Activated CD4-positive, alpha-beta T cell treated with anti-CD3 and anti-CD28 coated beads for 36 hours (primary cell): ENCODE measurements at regions of chr10 and their contacts with region 1.

Region 1: DNA sequence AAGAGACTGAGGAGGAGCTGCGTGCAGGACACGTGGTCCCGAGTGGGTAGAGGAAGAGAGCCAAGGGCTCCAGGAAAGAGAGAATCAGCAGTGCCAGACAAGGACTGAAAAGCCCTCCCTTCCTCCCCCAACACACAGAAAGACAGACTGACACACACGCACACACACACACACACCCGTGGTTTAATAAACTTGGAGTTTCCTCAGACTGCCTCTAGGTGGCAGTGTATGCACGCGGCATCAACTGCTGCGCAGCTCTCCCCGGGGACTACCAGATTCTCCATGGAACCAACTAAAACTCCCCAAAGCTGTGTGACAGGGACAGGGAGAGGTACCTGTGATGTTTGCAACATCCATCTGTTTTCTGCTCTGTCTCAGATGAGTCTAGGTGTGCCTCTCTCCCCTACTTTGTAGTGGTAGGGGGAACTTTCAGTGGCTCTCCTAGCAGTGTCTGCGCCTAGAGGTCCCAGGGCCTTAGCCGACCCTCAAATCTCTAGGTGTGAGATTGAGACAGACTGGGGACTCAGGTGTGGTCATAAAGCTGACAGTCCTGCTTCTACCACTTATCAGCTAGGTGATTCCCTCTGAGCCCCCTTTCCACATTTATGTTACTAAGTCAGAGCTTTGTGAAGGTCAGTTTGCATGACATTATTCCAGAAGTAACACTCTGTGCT is 9.3 kb upstream of the TSPAN14 start:
- DNase-seq: peak; percentile 65
- ATAC-seq: peak; percentile 83
- H3K4me3 Mint-ChIP-seq: no peak overlapping the region
- H3K27ac Mint-ChIP-seq: peak overlapping the region; percentile 48
- H3K4me1 Mint-ChIP-seq: peaks cover 64% of the 10 kb centered on the region
- H3K27me3 Mint-ChIP-seq: no peaks in the 10 kb centered on the region

Region 2: DNA sequence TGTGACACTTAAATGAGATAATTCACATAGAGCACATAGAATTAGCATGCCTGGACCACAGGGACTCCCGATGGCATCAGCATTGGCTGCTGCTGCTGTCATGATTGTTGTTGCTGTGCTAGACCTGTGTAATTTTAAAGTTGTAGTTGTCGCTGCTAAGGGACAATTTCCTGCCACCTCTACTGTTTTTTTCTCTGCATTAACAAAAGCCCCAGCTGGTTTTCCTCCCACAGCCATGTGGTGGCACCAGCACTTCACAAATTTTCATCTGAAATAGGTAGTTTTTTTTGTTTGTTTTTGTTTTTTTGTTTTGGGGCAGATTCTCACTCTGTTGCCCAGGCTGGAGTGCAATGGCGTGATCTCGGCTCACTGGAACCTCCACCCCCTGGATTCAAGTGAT is 61.8 kb before region 1 on chr10:
- CTCF ChIA-PET with region 1: interaction called, 24 read pairs
- POLR2A ChIA-PET with region 1: no interaction called
- intact Hi-C with region 1: loop called (anchors 1 to 2 kb)
- DNase-seq: peak; percentile 73
- ATAC-seq: peak; percentile 53
- H3K4me3 Mint-ChIP-seq: no peak overlapping the region
- H3K27ac Mint-ChIP-seq: no peak overlapping the region
- H3K4me1 Mint-ChIP-seq: peaks cover 15% of the 10 kb centered on the region
- H3K27me3 Mint-ChIP-seq: no peaks in the 10 kb centered on the region

Region 3: DNA sequence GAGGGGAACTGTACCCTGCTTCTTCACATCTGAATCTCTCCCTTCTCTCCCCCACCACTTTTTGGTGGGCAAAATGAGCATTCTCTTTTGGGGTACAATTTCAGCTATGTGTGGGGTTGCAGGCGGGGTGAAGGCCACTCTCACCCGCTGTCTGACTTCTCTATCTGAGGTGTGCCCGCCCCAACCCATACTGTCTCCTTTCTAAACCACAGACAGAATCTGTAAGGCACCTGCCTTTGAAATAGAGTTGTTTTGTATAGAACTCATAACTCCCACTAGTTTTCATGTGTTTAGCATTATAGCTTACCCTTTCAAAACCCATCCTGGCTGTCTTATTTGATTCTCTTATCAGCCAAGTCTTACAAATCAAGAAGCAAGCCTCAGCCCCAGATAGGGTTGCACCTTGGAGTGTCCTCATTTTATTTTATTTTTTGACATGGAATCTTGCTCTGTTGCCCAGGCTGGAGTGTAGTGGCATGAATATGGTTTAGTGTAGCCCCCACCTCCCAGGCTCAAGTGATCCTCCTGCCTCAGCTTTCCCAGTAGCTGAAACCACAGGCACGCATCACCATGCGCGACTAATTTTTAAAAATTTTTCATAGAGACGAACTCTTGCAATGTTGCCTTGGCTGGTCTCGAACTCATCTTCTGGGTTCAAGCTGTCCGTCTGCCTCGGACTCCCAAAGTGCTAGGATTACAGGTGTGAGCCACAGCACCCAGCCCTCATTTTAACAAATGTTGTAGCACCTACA is 21.2 kb after region 1 on chr10:
- CTCF ChIA-PET with region 1: interaction called, 16 read pairs
- POLR2A ChIA-PET with region 1: interaction called, 3 read pairs
- intact Hi-C with region 1: no loop called
- DNase-seq: peak; percentile 65
- ATAC-seq: peak; percentile 52
- H3K4me3 Mint-ChIP-seq: peak overlapping the region; percentile 64
- H3K27ac Mint-ChIP-seq: peak overlapping the region; percentile 97
- H3K4me1 Mint-ChIP-seq: peaks cover 98% of the 10 kb centered on the region
- H3K27me3 Mint-ChIP-seq: no peaks in the 10 kb centered on the region

Region 4: DNA sequence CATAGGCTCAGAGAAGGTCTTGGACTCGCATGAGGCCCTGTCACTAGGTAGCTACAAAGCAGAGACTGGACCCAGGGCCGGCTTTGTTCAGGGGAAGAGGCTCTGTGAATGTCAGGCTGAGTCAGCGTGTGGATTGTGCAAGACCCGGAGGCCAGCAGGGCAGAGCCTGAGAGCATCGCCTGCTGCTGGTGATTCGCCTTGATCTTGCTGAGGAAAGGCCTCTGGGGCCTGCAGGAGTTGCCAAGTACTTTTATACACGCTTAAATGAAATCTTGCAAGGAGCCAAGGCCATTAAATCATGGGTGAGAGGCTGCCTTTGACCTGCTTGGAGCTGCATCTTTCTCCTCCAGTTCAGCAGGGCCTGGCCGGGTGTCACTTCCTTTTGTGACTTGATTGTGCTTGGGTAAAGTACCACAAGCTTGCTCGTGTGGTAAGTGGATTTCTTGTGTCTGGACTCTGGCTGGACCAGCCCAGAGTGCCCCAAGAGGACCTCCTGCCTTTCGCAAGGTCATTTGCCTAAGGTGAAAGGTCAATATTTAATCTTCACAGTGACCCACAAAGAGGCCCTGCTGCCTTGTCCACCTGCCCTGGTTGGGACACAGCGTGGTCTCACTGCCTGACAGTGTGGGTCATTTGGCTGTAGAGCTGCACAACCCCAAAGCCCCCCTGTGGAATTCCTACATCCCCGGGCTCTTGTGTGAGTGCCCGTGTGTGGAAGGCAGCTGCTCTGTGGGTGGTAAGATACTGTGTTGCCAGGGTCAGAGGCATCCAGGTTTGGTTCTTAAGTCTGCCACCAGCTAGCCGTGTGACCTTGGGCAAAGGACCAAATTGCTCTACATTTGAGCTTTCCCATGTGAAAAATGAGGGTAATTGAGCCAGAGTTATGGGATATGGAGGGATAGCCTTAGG is 54.3 kb after region 1 on chr10:
- CTCF ChIA-PET with region 1: interaction called, 367 read pairs
- POLR2A ChIA-PET with region 1: no interaction called
- intact Hi-C with region 1: no loop called
- DNase-seq: peak; percentile 88
- ATAC-seq: peak; percentile 85
- H3K4me3 Mint-ChIP-seq: peak overlapping the region; percentile 23
- H3K27ac Mint-ChIP-seq: peak overlapping the region; percentile 98
- H3K4me1 Mint-ChIP-seq: peaks cover 100% of the 10 kb centered on the region
- H3K27me3 Mint-ChIP-seq: no peaks in the 10 kb centered on the region

Region 5: DNA sequence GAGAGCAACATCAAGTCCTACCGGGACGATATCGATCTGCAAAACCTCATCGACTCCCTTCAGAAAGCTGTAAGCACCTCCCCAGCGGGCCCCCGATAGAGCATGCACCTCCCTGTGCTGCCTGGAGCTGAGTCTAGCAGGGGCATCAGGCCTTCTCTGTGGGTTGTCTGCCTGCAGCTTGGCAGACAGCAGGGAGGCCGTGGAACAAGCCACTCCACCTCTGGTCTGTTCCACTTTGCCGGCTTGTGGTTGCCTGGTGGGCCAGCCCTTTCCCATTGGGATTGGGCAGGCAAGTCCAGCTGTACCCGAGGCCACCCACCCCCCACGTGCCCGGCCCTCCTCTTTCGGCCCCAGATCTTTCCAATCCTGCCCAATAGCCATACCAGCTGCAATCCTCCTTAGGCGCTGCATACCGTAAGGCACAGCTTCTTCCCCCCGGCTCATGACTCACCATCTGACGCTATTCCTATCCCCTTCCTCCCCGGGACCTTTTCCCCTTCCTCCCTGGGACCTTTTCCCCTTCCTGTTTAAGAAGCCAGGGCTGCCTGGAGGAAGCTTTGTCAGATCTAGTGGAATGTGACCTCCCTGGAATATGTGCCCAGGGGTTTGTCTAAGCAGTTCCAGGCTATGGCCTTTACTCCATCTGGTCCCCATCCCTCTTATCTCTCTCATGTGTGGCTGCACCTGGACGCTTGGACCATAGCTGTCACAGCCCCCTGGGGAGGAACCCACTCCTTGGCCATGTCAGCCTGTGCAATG is 64.8 kb after region 1 on chr10:
- CTCF ChIA-PET with region 1: interaction called, 367 read pairs
- POLR2A ChIA-PET with region 1: interaction called, 7 read pairs
- intact Hi-C with region 1: loop called (anchors 1 kb)
- DNase-seq: no peak
- ATAC-seq: no peak
- H3K4me3 Mint-ChIP-seq: no peak overlapping the region
- H3K27ac Mint-ChIP-seq: no peak overlapping the region
- H3K4me1 Mint-ChIP-seq: peaks cover 30% of the 10 kb centered on the region
- H3K27me3 Mint-ChIP-seq: no peaks in the 10 kb centered on the region

Region 6: GRCh38 chr10:80599424-80599847 is 154.7 kb after region 1 on chr10:
- CTCF ChIA-PET with region 1: interaction called, 3 read pairs
- POLR2A ChIA-PET with region 1: no interaction called
- intact Hi-C with region 1: loop called in 1 of 2 experiments (anchors 5 kb)
- DNase-seq: peak; percentile 64
- ATAC-seq: peak; percentile 80
- H3K4me3 Mint-ChIP-seq: no peak overlapping the region
- H3K27ac Mint-ChIP-seq: no peak overlapping the region
- H3K4me1 Mint-ChIP-seq: no peaks in the 10 kb centered on the region
- H3K27me3 Mint-ChIP-seq: no peaks in the 10 kb centered on the region

Region 7: DNA sequence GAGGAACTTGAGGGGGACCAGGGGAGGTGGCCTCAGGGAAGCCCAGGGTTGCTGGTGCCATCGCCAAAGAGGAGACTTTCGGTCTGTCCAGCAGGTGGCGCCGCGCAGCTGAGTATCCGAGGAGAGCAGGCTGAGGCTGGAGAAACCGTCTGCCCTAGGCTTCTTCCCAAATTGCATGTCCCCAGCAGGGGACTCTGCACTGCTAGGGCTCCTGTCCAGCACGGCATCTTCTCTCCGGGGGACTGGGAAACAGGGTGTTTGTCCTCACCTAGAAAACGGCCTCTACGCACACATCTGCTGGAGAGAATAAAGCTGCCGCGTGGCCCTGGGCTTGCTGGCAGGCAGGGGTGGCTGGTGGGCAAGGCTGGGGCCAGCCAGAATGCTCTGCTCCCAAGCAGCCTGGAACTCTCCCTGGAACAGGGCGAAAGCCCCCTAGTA is 254.8 kb after region 1 on chr10:
- CTCF ChIA-PET with region 1: no interaction called
- POLR2A ChIA-PET with region 1: no interaction called
- intact Hi-C with region 1: loop called in 1 of 2 experiments (anchors 10 kb)
- DNase-seq: peak; percentile 89
- ATAC-seq: peak; percentile 93
- H3K4me3 Mint-ChIP-seq: no peak overlapping the region
- H3K27ac Mint-ChIP-seq: no peak overlapping the region
- H3K4me1 Mint-ChIP-seq: no peaks in the 10 kb centered on the region
- H3K27me3 Mint-ChIP-seq: no peaks in the 10 kb centered on the region